CD8-positive, alpha-beta T cell (primary cell): ENCODE measurements at regions of chr19 and their contacts with region 1.

Region 1: DNA sequence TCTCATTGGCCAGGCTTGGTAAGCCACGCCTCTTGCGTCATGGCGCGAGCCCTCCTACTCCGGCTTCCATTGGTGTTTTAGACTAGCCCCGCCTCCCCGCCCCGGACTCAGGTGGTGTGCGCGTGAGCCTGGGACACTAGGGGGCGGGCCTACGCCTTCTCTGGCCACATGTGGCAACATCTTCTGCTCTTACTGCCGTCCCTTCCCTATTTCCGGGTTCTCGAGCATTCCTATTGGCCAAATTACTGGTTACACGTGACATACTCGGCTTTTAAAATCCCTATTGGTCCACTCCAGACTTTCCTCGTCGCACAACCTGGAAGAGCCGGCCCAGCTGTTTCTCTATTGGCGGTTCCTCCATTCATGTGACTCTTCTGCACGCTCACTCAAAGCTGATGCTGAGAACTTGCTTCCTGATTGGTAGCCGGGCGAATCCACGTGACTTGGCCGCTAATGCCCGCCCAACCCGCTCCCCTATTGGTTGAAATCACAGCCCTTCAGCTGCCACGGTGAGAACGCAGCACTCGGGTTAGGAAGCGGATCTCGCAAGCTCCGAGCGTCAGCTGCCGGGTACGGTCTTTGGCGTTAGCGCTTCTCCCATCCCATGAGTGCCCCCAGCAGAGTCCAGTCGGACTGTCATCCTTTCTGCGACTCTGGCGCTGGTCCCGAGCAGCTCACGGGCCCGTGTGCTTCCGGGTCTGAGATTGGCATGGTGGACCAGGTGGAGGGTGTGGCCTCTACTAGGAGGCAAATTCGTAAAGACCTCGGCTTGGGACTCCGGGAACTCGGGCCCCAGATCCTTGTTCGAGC is at the start of gene BLOC1S3:
- DNase-seq: peak; percentile 99 to 100 (median 100)
- ATAC-seq: peak; percentile 87
- H3K4me3 ChIP-seq: peak within 1 kb of the TSS; percentile 94 to 95
- H3K4me3 Mint-ChIP-seq: peak within 1 kb of the TSS; percentile 94
- H3K27ac ChIP-seq: peak within 1 kb of the TSS; percentile 87 to 93
- H3K27ac Mint-ChIP-seq: peak within 1 kb of the TSS; percentile 98
- H3K4me1 ChIP-seq: peaks cover 37% of the 10 kb centered on the region
- H3K4me1 Mint-ChIP-seq: peaks cover 43% of the 10 kb centered on the region
- H3K27me3 ChIP-seq: no peaks in the 10 kb centered on the region
- H3K27me3 Mint-ChIP-seq: no peaks in the 10 kb centered on the region
- CTCF ChIP-seq: no peak
- total RNA-seq, gene BLOC1S3: 17.7 to 21.6 TPM

Region 2: DNA sequence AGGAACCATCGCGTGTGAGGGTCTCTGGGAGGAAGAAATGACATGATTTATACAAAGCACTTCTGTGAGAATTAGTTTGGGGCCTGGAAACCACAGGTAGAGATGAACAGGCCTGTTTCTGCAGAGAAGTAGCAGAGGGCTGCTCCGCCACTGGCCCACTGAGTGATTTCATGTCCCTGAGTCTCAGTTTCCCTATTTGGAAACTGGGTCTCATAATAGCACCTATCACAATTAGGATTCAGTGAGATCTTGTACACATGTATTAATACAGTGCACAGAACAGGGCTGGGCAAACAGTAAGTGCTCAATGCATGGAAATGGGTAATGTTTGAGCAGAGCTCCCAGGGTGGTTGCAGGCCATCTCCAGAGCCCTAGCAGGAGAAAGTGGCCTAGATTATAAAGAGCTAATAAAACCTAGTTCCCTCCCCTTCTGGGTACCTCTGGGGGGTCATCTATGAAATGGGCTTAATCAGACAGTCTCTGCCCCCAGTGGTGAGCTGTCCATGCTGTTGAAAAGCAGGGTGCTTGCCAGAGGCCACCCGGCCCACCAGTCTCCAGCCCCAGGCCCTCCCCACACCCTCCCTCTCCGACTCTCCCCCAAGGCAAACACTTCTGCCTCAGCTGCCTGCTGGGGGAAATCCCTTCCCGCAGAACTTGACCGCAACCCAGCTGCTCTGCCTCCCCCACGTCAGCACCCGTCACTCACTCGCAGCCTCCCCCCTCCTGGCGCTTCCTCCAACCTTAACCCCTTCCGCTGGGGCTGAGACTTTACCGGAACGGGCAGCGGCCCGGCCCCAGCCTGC is 425.4 kb before region 1 on chr19:
- CTCF ChIA-PET with region 1: no interaction called
- POLR2A ChIA-PET with region 1: no interaction called
- intact Hi-C with region 1: loop called in 1 of 2 experiments (anchors 2 kb)
- DNase-seq: peak; percentile 88 to 99 (median 93)
- ATAC-seq: peak; percentile 76
- H3K4me3 ChIP-seq: peak overlapping the region; percentile 13 to 68
- H3K4me3 Mint-ChIP-seq: peak overlapping the region; percentile 95
- H3K27ac ChIP-seq: peak overlapping the region; percentile 83 to 95
- H3K27ac Mint-ChIP-seq: peak overlapping the region; percentile 97
- H3K4me1 ChIP-seq: peaks cover 64% of the 10 kb centered on the region
- H3K4me1 Mint-ChIP-seq: peaks cover 65% of the 10 kb centered on the region
- H3K27me3 ChIP-seq: no peaks in the 10 kb centered on the region
- H3K27me3 Mint-ChIP-seq: no peaks in the 10 kb centered on the region
- CTCF ChIP-seq: no peak

Region 3: DNA sequence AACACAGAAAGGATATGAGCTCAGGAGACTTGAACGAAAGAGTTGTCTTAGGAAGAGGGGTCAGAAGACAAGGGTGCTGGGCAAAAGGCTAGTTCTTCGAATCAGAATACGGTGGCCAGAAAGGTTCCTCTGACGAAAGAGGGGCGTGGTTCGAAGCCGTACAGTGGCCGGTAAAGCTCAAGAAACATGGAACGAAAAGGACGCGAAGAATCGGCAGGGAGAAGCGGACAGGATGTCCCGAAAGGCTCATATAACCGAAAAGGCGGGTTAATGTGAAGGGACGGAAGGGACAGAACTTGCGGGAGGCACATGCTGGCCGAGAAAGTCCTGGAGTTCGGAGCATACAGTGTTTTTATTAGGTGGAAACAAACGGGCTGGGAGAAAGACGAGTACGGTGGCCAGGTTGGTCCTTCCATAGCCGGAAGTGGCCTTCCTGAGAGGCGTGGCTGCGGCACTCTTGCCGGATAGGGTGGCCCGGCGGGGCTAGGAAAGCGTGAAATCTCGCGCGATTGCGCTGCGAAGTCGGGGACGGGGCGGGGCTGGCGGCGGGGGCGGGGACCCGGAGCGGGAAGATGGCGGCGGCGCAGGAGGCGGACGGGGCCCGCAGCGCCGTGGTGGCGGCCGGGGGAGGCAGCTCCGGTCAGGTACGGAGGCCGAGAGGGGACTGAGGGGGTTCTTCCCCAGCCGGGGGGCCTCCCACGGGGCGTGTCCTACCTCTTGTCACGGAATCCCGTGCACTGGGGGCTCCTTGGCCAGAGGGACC is 223.5 kb before region 1 on chr19 and contains the start of gene CLPTM1:
- CTCF ChIA-PET with region 1: no interaction called
- POLR2A ChIA-PET with region 1: interaction called, 3 read pairs
- intact Hi-C with region 1: loop called (anchors 1 to 2 kb)
- DNase-seq: peak; percentile 93 to 98 (median 96)
- ATAC-seq: peak; percentile 91
- H3K4me3 ChIP-seq: peak within 1 kb of the TSS; percentile 72 to 88
- H3K4me3 Mint-ChIP-seq: peak within 1 kb of the TSS; percentile 97
- H3K27ac ChIP-seq: peak within 1 kb of the TSS; percentile 76 to 92
- H3K27ac Mint-ChIP-seq: peak within 1 kb of the TSS; percentile 97
- H3K4me1 ChIP-seq: peaks cover 31% of the 10 kb centered on the region
- H3K4me1 Mint-ChIP-seq: peaks cover 56% of the 10 kb centered on the region
- H3K27me3 ChIP-seq: no peaks in the 10 kb centered on the region
- H3K27me3 Mint-ChIP-seq: no peaks in the 10 kb centered on the region
- CTCF ChIP-seq: no peak
- total RNA-seq, gene CLPTM1: 108 to 113 TPM

Region 4: GRCh38 chr19:45038931-45039893 is 139.3 kb before region 1 on chr19 and contains the start of gene CLASRP:
- CTCF ChIA-PET with region 1: no interaction called
- POLR2A ChIA-PET with region 1: interaction called, 9 read pairs
- intact Hi-C with region 1: loop called in 1 of 2 experiments (anchors 1 kb)
- DNase-seq: peak; percentile 73 to 94 (median 89)
- ATAC-seq: peak; percentile 89
- H3K4me3 ChIP-seq: peak within 1 kb of the TSS; percentile 86 to 89
- H3K4me3 Mint-ChIP-seq: peak within 1 kb of the TSS; percentile 93
- H3K27ac ChIP-seq: peak within 1 kb of the TSS; percentile 92 to 96
- H3K27ac Mint-ChIP-seq: peak within 1 kb of the TSS; percentile 90
- H3K4me1 ChIP-seq: peaks cover 23% of the 10 kb centered on the region
- H3K4me1 Mint-ChIP-seq: peaks cover 32% of the 10 kb centered on the region
- H3K27me3 ChIP-seq: no peaks in the 10 kb centered on the region
- H3K27me3 Mint-ChIP-seq: no peaks in the 10 kb centered on the region
- CTCF ChIP-seq: no peak
- total RNA-seq, gene CLASRP: 144 to 153 TPM

Region 5: GRCh38 chr19:45092747-45093678 is 85.5 kb before region 1 on chr19 and contains the start of gene PPP1R37:
- CTCF ChIA-PET with region 1: no interaction called
- POLR2A ChIA-PET with region 1: interaction called, 21 read pairs
- intact Hi-C with region 1: loop called (anchors 1 kb)
- DNase-seq: peak; percentile 76 to 97 (median 92)
- ATAC-seq: peak; percentile 76
- H3K4me3 ChIP-seq: peak within 1 kb of the TSS; percentile 64 to 88
- H3K4me3 Mint-ChIP-seq: peak within 1 kb of the TSS; percentile 93
- H3K27ac ChIP-seq: peak within 1 kb of the TSS; percentile 84 to 96
- H3K27ac Mint-ChIP-seq: peak within 1 kb of the TSS; percentile 97
- H3K4me1 ChIP-seq: peaks cover 51% of the 10 kb centered on the region
- H3K4me1 Mint-ChIP-seq: peaks cover 67% of the 10 kb centered on the region
- H3K27me3 ChIP-seq: no peaks in the 10 kb centered on the region
- H3K27me3 Mint-ChIP-seq: no peaks in the 10 kb centered on the region
- CTCF ChIP-seq: peak; percentile 43
- total RNA-seq, gene PPP1R37: 19.3 to 19.9 TPM

Region 6: DNA sequence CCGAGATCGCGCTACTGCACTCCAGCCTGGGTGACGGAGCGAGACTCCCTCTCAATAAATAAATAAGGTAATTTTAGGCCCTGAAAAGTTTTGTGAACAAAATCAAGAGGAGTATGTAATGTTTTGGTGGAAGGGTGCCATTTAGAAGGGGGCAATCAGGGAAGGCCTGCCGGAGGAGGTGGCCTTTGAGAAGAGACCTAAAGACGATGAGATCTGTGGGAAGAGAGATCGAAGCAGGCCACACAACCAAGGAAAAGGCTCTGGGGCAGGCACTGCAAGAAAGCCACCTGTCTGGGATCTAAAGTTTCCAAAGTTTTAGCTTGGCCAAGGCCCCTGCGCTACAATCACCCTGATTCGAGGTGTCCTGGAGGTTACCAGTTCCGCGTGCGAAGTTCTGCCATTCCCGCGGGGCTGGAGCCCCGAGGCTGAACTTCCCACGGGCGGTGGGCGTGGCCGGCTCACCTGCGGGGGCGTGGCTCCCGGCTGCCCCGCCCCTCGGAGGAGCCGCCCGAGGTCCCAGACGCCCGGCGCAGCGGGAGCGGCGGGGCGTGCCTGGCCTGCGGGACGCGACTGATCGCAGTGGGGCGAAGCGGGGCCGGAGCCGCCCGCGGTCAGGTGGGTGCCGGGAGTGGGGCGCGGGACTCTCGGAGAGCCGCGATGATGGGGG is 161.9 kb after region 1 on chr19 and contains the start of gene KLC3:
- CTCF ChIA-PET with region 1: no interaction called
- POLR2A ChIA-PET with region 1: no interaction called
- intact Hi-C with region 1: no loop called
- DNase-seq: peak in 6 of 9 experiments; percentile 14 to 58 (median 41)
- ATAC-seq: peak; percentile 54
- H3K4me3 ChIP-seq: peak within 1 kb of the TSS in 1 of 2 experiments; percentile 23
- H3K4me3 Mint-ChIP-seq: peak within 1 kb of the TSS; percentile 71
- H3K27ac ChIP-seq: no peak within 1 kb of the TSS
- H3K27ac Mint-ChIP-seq: no peak within 1 kb of the TSS
- H3K4me1 ChIP-seq: no peaks in the 10 kb centered on the region
- H3K4me1 Mint-ChIP-seq: peaks cover 6% of the 10 kb centered on the region
- H3K27me3 ChIP-seq: peaks cover 11 to 25% of the 10 kb centered on the region in 2 experiments
- H3K27me3 Mint-ChIP-seq: peaks cover 34% of the 10 kb centered on the region
- CTCF ChIP-seq: no peak
- total RNA-seq, gene KLC3: not detected

Region 7: GRCh38 chr19:45405435-45406225 is 227.2 kb after region 1 on chr19:
- CTCF ChIA-PET with region 1: no interaction called
- POLR2A ChIA-PET with region 1: no interaction called
- intact Hi-C with region 1: loop called (anchors 1 to 2 kb)
- DNase-seq: peak; percentile 69 to 89 (median 85)
- ATAC-seq: peak; percentile 63
- H3K4me3 ChIP-seq: peak overlapping the region; percentile 63 to 85
- H3K4me3 Mint-ChIP-seq: peak overlapping the region; percentile 97
- H3K27ac ChIP-seq: peak overlapping the region; percentile 68 to 92
- H3K27ac Mint-ChIP-seq: peak overlapping the region; percentile 95
- H3K4me1 ChIP-seq: peaks cover 25% of the 10 kb centered on the region
- H3K4me1 Mint-ChIP-seq: peaks cover 31% of the 10 kb centered on the region
- H3K27me3 ChIP-seq: peaks cover 16 to 26% of the 10 kb centered on the region in 2 experiments
- H3K27me3 Mint-ChIP-seq: peaks cover 26% of the 10 kb centered on the region
- CTCF ChIP-seq: no peak

Region 8: DNA sequence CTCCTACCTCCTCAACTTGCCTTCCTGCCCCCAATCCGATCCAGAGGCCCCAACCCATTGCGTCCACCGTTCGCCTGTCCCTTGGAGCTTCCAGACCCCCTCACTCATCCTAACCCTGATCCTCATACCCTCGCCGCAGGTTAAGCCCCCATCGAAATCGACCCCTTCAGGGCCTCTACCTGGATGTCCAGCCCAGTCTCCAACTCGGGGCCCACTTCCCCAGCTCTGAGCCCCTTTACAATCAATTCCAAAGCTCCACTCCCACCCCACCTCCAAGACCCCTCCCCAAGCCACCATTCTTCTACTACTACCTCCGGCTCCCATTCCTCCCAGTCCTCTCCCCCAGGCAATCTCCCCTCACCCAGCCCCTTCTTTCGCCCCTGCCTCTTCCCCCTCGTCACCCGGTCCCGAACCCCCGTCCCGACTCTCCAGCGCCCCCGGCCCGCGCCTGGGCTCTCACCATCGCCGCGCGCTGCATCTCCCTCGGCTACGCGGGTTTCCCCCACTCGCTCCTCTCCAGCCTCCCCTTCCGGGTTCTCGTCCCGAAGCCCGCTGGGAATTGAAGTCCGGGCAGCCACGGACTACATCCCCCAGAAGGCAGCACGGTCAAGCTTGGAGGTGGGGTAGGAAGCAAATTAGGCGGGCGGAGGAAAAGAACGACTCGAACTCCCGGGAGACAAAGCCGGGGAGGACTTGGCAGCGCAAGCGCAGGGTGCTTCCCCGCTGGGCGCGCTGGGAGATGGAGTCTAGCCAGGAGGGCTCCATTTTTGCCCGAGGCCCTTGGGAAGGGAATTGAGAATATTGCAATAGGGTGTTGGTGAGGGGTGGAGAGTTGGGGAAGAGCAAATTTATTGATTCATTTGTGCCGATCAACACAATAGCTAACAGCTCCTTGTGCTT is 552.2 kb after region 1 on chr19 and contains the start of gene FBXO46:
- CTCF ChIA-PET with region 1: no interaction called
- POLR2A ChIA-PET with region 1: no interaction called
- intact Hi-C with region 1: loop called in 1 of 2 experiments (anchors 2 kb)
- DNase-seq: peak; percentile 82 to 97 (median 92)
- ATAC-seq: peak; percentile 98
- H3K4me3 ChIP-seq: peak within 1 kb of the TSS; percentile 74 to 91
- H3K4me3 Mint-ChIP-seq: peak within 1 kb of the TSS; percentile 97
- H3K27ac ChIP-seq: peak within 1 kb of the TSS; percentile 67 to 78
- H3K27ac Mint-ChIP-seq: peak within 1 kb of the TSS; percentile 92
- H3K4me1 ChIP-seq: peaks cover 19% of the 10 kb centered on the region
- H3K4me1 Mint-ChIP-seq: peaks cover 32% of the 10 kb centered on the region
- H3K27me3 ChIP-seq: no peaks in the 10 kb centered on the region
- H3K27me3 Mint-ChIP-seq: no peaks in the 10 kb centered on the region
- CTCF ChIP-seq: no peak
- total RNA-seq, gene FBXO46: 15.2 to 17.1 TPM